ENCODE measurements at regions of chr4 and their contacts with region 1.

Region 1: DNA sequence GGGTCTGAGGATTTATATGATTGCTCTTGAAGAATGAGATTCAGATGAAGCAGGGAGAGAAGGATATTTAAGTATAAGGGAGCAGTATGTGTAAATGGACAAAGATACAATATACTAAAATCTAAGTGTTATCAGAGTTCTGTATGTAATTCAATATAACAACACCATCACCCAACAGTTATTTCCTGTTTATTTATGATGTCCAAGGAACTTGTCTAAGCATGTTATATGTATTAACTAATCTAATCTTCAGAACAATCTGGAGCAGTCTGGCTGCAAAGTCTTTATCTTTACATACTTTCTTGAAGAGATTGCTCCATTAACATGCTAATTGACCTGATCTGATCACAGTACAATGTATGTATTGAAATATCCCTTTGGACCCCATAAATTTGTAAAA is 203.8 kb upstream of the WDFY3 start:
- DNase-seq: no peak
- H3K4me3 Mint-ChIP-seq: no peak overlapping the region
- H3K27ac Mint-ChIP-seq: no peak overlapping the region
- H3K4me1 Mint-ChIP-seq: no peaks in the 10 kb centered on the region
- H3K27me3 Mint-ChIP-seq: no peaks in the 10 kb centered on the region

Region 2: GRCh38 chr4:84291969-84292368 is 878.3 kb before region 1 on chr4:
- intact Hi-C with region 1: loop called (anchors 5 kb)
- DNase-seq: no peak
- H3K4me3 Mint-ChIP-seq: no peak overlapping the region
- H3K27ac Mint-ChIP-seq: no peak overlapping the region
- H3K4me1 Mint-ChIP-seq: no peaks in the 10 kb centered on the region
- H3K27me3 Mint-ChIP-seq: no peaks in the 10 kb centered on the region

Measured in activated T-helper 1 cell treated with anti-CD3 and anti-CD28 coated beads, Interleukin-12 subunit alpha, Interleukin-12 subunit beta, Interleukin-2, Interleukin-4 antibody, amounts not matched to agents 30 ng/mL and 10 ng/mL and 1 ng/mL, durations not matched to agents 14 hours and 24 hours and 36 hours (primary cell).